OCI-LY7 (cell line): ENCODE measurements at regions of chr10 and their contacts with region 1.

Region 1: DNA sequence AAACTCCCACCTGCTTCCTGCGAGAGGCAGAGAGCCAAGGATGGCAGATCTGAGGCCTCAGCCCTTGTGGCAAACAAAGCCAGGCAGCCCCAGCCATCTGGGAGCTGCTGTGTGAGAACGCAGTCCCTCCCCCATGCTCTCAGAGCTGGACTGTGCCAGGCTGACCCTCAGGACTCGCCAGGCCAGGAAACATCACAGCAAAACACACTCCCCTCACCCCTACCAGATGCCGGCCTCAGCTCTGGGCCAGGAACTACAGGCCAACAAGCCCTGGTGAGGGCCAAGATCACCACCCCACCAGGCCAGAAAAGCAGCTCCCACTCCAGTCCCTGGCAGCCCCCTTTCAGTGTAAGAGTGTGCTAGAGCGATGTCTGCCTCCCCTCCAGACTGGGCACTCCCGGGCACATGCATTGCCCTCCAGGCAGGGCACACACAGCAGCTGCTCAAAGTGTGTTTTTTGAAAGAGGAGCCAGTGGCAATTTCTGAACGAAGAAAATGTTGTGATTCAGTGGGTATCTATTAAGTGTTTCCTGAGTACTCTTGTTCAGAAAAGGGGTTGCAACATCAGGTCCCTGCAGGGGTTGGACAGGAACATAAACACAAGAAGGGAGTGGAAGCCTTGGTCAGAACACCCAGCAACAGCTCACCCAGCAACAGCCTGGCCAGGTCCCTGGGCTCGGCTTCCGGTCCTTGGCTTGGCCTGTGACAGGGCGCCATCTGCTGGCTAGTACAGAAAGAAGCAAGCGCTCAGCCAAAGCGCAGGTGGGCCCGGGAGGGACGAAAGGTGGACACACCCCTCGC is 18.3 kb downstream of the LRRC20 start:
- DNase-seq: peak; percentile 92
- H3K4me3 ChIP-seq: no peak overlapping the region
- H3K27ac ChIP-seq: peak overlapping the region; percentile 20
- H3K4me1 ChIP-seq: peaks cover 16% of the 10 kb centered on the region
- CTCF ChIP-seq: peak; percentile 98

Region 2: GRCh38 chr10:70115948-70116682 is 248.1 kb before region 1 on chr10:
- CTCF ChIA-PET with region 1: interaction called, 3 read pairs
- POLR2A ChIA-PET with region 1: no interaction called
- intact Hi-C with region 1: loop called (anchors 1 kb)
- DNase-seq: peak; percentile 71
- H3K4me3 ChIP-seq: no peak overlapping the region
- H3K27ac ChIP-seq: no peak overlapping the region
- H3K4me1 ChIP-seq: no peaks in the 10 kb centered on the region
- CTCF ChIP-seq: peak; percentile 95

Region 3: DNA sequence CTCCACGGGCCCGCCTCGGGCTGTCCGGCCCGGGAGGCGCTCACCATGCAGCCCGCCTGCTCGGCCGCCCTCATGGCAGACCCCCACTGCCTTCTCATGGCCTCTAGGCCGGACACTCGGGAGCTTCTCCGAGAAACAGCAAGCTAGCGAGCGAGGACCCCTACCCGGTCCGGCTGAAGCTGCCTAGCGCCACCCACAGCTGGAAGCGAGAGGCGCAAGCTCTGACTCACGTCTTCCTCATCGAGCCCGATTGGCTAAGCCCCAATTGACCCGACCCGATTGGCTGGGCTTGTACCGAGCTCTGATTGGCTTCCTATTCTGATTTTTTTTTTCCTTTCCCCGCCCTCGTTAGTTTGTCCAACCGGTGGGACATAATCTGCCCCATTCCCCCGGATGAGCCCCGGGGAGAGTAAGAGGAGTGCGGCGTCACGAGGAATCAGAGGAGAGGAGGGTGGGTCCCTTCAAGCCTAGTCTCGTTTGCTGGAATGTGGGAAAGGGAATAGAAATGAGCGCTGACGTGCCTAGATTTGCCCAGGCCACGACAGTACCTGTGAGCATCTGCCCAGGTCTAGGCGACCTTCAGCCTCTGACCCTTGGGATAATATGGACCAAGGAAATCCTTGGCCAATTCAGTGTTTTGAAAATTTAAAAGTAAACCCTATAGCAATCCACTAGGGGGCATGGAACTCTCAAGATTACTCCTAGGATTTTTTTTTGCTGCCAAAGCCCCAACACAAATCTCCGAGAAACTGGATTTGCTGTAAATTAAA is 217.5 kb before region 1 on chr10 and contains the start of gene TYSND1:
- CTCF ChIA-PET with region 1: interaction called, 6 read pairs
- POLR2A ChIA-PET with region 1: interaction called, 4 read pairs
- intact Hi-C with region 1: loop called (anchors 10 kb)
- DNase-seq: peak; percentile 99
- H3K4me3 ChIP-seq: peak within 1 kb of the TSS; percentile 76
- H3K27ac ChIP-seq: peak within 1 kb of the TSS; percentile 78
- H3K4me1 ChIP-seq: peaks cover 17% of the 10 kb centered on the region
- CTCF ChIP-seq: peak; percentile 84
- total RNA-seq, gene TYSND1: 32.5 and 33.4 TPM in 2 replicates

Region 4: DNA sequence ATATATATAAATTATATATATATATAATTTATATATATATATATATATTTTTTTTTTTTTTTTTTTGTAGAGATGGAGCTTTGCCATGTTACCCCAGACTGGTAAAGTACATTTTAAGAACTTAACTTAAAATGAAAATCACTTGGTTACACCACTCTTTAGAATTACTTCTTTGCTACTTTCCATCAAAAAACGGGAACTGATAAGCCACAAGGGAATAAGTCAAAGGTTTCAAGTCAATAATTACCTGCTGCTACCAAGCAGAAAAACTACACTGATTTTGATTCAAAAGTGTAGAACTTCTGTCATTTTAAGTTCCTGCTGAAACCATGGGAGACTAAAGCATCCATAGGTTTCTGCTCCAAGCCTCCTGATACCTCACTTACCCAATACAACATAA is 143.1 kb before region 1 on chr10:
- CTCF ChIA-PET with region 1: interaction called, 14 read pairs
- POLR2A ChIA-PET with region 1: interaction called, 7 read pairs
- intact Hi-C with region 1: loop called (anchors 1 kb)
- DNase-seq: peak; percentile 13
- H3K4me3 ChIP-seq: no peak overlapping the region
- H3K27ac ChIP-seq: peak overlapping the region; percentile 5
- H3K4me1 ChIP-seq: peaks cover 23% of the 10 kb centered on the region
- CTCF ChIP-seq: no peak

Region 5: GRCh38 chr10:70265032-70265689 is 99.0 kb before region 1 on chr10:
- CTCF ChIA-PET with region 1: interaction called, 21 read pairs
- POLR2A ChIA-PET with region 1: interaction called, 10 read pairs
- intact Hi-C with region 1: loop called (anchors 1 kb)
- DNase-seq: peak; percentile 78
- H3K4me3 ChIP-seq: no peak overlapping the region
- H3K27ac ChIP-seq: no peak overlapping the region
- H3K4me1 ChIP-seq: peaks cover 7% of the 10 kb centered on the region
- CTCF ChIP-seq: peak; percentile 90

Region 6: DNA sequence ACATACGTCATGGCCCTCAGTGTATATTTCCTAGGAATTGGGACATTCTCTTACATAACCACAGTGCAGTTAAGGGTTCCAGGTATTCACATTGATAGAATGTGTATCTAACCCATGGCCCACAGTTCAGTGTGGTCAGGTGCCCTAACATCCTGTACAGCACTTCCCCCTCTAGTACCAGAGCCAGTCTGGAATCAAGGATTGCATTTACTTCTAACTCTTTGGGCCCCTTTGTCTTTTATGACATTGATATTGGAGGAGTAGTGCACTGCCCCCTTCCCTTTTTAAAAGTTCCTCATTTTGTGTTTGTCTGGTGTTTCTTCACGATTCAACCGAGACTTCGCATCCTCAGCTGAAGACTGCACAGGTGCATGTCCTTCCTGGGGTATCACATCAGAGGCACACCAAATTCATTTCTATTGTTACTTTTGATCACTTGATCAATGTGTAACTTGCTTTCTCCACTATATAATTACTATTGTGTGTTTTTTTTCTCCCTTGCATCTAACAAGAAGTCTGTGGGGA is 57.9 kb before region 1 on chr10:
- CTCF ChIA-PET with region 1: interaction called, 15 read pairs
- POLR2A ChIA-PET with region 1: no interaction called
- intact Hi-C with region 1: no loop called
- DNase-seq: peak; percentile 83
- H3K4me3 ChIP-seq: peak overlapping the region; percentile 19
- H3K27ac ChIP-seq: peak overlapping the region; percentile 85
- H3K4me1 ChIP-seq: peaks cover 40% of the 10 kb centered on the region
- CTCF ChIP-seq: no peak

Region 7: DNA sequence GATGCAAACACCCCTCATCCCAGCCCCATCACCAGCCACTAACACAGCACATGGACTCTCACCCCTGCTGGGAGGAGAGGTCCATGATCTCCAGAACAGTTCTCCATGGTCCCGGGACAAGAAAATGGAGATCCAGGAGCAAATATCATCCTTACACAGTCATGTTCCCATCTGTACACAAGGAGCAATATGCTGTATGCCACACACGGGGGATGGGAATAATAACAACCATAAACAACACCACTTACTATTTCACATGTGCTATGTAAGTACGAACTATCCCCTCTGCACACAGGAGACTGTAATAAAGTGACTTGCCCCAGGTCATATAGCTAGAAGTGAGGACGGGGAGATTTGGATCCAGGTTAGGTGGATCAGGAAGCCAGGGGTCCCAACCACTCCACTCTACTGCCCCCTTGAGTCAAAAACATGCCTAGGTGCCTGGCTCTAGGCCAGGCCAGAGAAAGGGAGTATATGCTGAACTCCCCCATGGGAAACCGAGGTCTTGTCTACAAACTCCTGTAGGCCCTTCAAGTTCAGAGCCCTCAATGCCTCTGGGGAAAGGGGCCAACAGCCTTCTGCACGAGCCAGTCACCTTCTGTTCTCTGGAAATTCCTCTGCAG is 15.8 kb before region 1 on chr10:
- CTCF ChIA-PET with region 1: interaction called, 5 read pairs
- POLR2A ChIA-PET with region 1: interaction called, 5 read pairs
- intact Hi-C with region 1: loop called (anchors 1 kb)
- DNase-seq: peak; percentile 77
- H3K4me3 ChIP-seq: no peak overlapping the region
- H3K27ac ChIP-seq: no peak overlapping the region
- H3K4me1 ChIP-seq: peaks cover 20% of the 10 kb centered on the region
- CTCF ChIP-seq: peak; percentile 97